Heart left ventricle (tissue), 16 donors: ENCODE measurements at regions of chr1 and their contacts with region 1.

Region 1: DNA sequence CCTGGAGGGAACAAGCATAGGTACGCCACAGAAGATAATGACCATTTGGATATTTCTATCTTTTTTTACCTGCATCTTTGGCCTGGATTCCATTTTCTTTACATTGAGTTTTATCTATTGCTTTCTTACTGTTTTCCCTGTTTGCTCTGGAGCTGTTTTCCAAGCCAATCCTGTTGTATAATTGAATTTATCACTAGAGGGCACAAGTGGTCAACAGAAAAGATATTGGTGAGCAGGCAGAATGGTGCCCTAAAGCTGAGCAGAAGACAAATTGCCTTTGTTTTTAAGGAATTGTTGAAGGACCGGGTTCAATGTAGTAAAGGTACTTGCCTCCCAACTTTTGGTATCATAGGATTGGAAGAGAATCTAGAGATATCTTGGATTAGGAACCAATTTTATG is 152.8 kb downstream of the PPP1R12B start:
- DNase-seq: no peak
- ATAC-seq: no peak
- H3K4me3 ChIP-seq: no peak overlapping the region
- H3K27ac ChIP-seq: peak overlapping the region in 1 of 12 donors; percentile 6
- H3K4me1 ChIP-seq: peaks cover 0 to 47% (median 12%) of the 10 kb centered on the region in 12 donors
- H3K27me3 ChIP-seq: peaks cover 0 to 22% (median 0%) of the 10 kb centered on the region in 9 donors
- CTCF ChIP-seq: peak in 11 of 12 donors; percentile 34 to 62 (median 54)
- POLR2A ChIP-seq: no peak

Region 2: GRCh38 chr1:202283379-202283844 is 217.9 kb before region 1 on chr1:
- intact Hi-C with region 1: no loop called
- DNase-seq: no peak
- ATAC-seq: no peak
- H3K4me3 ChIP-seq: no peak overlapping the region
- H3K27ac ChIP-seq: no peak overlapping the region
- H3K4me1 ChIP-seq: peaks cover 0 to 21% (median 6%) of the 10 kb centered on the region in 12 donors
- H3K27me3 ChIP-seq: no peaks in the 10 kb centered on the region
- CTCF ChIP-seq: no peak
- POLR2A ChIP-seq: no peak

Region 3: DNA sequence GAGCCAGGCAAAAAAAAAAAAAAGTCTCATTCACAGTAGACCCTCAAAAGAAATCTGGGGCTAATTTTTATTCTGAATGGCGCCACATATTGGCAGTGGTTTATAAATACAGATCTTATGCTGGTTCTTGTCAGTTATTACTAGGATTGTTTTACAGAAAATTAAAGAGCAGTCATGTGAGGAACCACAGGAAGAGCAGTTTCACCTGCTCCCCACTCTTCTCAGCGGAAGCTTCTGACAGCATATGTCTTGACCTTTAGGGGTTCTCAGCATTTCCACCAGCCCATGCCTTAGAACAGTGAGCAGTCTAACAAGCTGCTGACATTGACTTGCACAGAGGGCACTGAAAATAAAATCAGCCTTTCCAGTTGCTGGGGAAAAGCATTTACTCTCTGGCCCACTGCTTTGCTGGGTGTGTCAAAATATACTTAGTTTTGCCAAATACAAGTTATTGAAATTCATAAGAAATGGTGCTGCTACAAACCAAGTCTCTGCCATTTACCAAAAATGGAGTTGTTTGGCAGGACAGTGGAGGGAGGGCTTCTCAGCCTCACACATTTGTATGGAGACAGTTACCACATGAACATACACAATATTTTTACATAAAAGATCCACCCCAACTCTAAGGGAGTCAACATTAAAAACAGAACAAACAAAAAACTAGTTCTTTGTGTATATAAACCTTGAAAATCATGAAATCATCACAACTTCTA is 64.8 kb after region 1 on chr1:
- intact Hi-C with region 1: loop called in 6 of 10 experiments (anchors 5 to 10 kb)
- DNase-seq: no peak
- ATAC-seq: peak in 2 of 4 donors; percentile 9 to 23
- H3K4me3 ChIP-seq: no peak overlapping the region
- H3K27ac ChIP-seq: peak overlapping the region; percentile 12 to 78 (median 36)
- H3K4me1 ChIP-seq: peaks cover 0 to 90% (median 48%) of the 10 kb centered on the region in 12 donors
- H3K27me3 ChIP-seq: no peaks in the 10 kb centered on the region
- CTCF ChIP-seq: no peak
- POLR2A ChIP-seq: no peak

Region 4: GRCh38 chr1:202571347-202572339 is 70.4 kb after region 1 on chr1:
- intact Hi-C with region 1: loop called in 5 of 10 experiments (anchors 5 to 10 kb)
- DNase-seq: no peak
- ATAC-seq: no peak
- H3K4me3 ChIP-seq: no peak overlapping the region
- H3K27ac ChIP-seq: peak overlapping the region in 2 of 12 donors; percentile 27 to 78
- H3K4me1 ChIP-seq: peaks cover 0 to 81% (median 28%) of the 10 kb centered on the region in 12 donors
- H3K27me3 ChIP-seq: no peaks in the 10 kb centered on the region
- CTCF ChIP-seq: peak; percentile 54 to 85 (median 71)
- POLR2A ChIP-seq: no peak

Region 5: GRCh38 chr1:202599677-202600431 is 98.6 kb after region 1 on chr1:
- intact Hi-C with region 1: loop called in 4 of 10 experiments (anchors 2 to 10 kb)
- DNase-seq: peak; percentile 50 to 73 (median 64)
- ATAC-seq: peak; percentile 67 to 88 (median 84)
- H3K4me3 ChIP-seq: no peak overlapping the region
- H3K27ac ChIP-seq: peak overlapping the region in 3 of 12 donors; percentile 22 to 27 (median 26)
- H3K4me1 ChIP-seq: peaks cover 0 to 8% (median 3%) of the 10 kb centered on the region in 12 donors
- H3K27me3 ChIP-seq: peaks cover 0 to 63% (median 0%) of the 10 kb centered on the region in 9 donors
- CTCF ChIP-seq: peak; percentile 54 to 81 (median 72)
- POLR2A ChIP-seq: no peak